ENCODE measurements at regions of chr17 and their contacts with region 1.

Region 1: GRCh38 chr17:28252436-28252835 is 66.6 kb upstream of the TMEM97 start:
- DNase-seq: no peak
- H3K4me3 ChIP-seq: no peak overlapping the region
- H3K27ac ChIP-seq: no peak overlapping the region
- H3K4me1 ChIP-seq: peaks cover 0 to 5% (median 3%) of the 10 kb centered on the region in 4 experiments; a peak in 4 of 7 replicates
- H3K27me3 ChIP-seq: 0 out of 7 replicates have a peak, but pooled peaks cover 0 to 2% (median 0%) of the 10 kb centered on the region in 4 experiments
- CTCF ChIP-seq: no peak
- EP300 ChIP-seq: no peak
- POLR2A ChIP-seq: no peak
- RAD21 ChIP-seq: no peak

Region 2: GRCh38 chr17:28161311-28161710 is 91.1 kb before region 1 on chr17:
- CTCF ChIA-PET with region 1: no interaction called
- POLR2A ChIA-PET with region 1: no interaction called
- DNase-seq: no peak
- H3K4me3 ChIP-seq: no peak overlapping the region
- H3K27ac ChIP-seq: no peak overlapping the region
- H3K4me1 ChIP-seq: no peaks in the 10 kb centered on the region
- H3K27me3 ChIP-seq: no peaks in the 10 kb centered on the region
- CTCF ChIP-seq: no peak
- EP300 ChIP-seq: no peak
- POLR2A ChIP-seq: no peak
- RAD21 ChIP-seq: no peak

Region 3: DNA sequence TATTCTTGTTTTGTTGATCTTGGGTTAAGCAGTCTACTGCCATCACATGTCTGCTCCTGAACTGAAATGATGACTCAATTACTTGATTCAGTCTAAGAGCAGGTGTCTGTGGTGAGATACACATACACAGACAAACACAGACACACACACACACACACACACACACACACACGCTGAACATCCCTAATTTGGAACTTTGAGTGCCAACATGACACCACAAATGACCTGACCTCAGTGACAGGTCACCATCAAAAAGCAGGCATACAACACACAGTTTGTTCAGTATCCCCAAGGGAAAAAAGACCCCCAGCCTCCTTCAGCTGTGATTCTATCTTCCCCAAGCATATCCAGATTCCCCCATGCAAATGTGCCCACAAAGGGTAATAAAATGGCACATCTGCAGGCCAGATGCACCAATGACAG is 63.6 kb before region 1 on chr17:
- CTCF ChIA-PET with region 1: no interaction called
- POLR2A ChIA-PET with region 1: no interaction called
- DNase-seq: no peak
- H3K4me3 ChIP-seq: no peak overlapping the region
- H3K27ac ChIP-seq: no peak overlapping the region
- H3K4me1 ChIP-seq: no peaks in the 10 kb centered on the region
- H3K27me3 ChIP-seq: no peaks in the 10 kb centered on the region
- CTCF ChIP-seq: no peak
- EP300 ChIP-seq: no peak
- POLR2A ChIP-seq: no peak
- RAD21 ChIP-seq: no peak

Region 4: DNA sequence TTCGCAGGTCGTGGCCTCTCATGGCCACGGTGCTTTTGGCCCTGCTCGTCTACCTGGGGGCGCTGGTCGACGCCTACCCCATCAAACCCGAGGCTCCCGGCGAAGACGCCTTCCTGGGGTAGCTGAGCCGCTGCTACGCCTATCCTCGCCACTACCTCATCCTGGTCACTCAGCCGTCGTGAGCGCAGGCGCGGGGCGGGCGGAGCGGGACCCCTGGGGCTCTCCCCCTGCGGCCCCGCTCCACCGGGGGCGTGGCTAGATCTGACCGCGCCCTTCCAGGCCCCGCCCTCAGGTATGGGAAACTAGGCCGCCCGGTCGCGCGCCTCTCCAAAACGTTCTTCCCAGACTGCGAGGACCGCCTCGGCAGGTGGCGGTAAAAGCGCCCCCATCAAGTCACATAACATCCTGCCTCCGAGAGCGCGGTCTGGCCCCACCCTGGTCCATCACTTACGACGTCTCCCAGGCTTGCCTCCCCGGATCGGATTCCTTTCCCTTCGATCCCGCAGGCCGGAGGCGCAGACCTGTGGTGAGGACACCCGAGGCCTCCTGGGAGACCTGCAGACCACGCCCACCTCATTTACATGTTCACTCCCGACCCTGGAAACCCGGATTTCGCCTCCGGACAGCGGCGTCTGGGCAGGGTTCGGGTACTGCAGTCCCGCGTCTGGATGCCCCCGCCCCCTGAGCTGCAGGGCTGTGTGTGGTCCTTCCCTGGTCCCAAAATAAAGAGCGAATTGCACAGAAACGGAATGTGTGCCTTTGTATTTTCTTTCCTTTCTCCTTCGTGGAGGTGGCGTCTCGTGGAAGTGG is 24.9 kb before region 1 on chr17:
- CTCF ChIA-PET with region 1: interaction called, 266 read pairs
- POLR2A ChIA-PET with region 1: interaction called, 3 read pairs
- DNase-seq: peak; percentile 94 to 98
- H3K4me3 ChIP-seq: peak overlapping the region; percentile 78 to 86 (median 84)
- H3K27ac ChIP-seq: peak overlapping the region; percentile 74; the same call in 1 of the 2 replicates
- H3K4me1 ChIP-seq: peaks cover 6 to 24% (median 9%) of the 10 kb centered on the region in 4 experiments
- H3K27me3 ChIP-seq: no peaks in the 10 kb centered on the region
- CTCF ChIP-seq: peak in 2 of 3 experiments; percentile 3 to 33; a peak in 3 of 4 replicates
- EP300 ChIP-seq: no peak
- POLR2A ChIP-seq: peak in 1 of 2 experiments; percentile 86; a peak in 2 of 3 replicates
- RAD21 ChIP-seq: peak; percentile 11 to 18; a peak in 1 of 4 replicates

Region 5: DNA sequence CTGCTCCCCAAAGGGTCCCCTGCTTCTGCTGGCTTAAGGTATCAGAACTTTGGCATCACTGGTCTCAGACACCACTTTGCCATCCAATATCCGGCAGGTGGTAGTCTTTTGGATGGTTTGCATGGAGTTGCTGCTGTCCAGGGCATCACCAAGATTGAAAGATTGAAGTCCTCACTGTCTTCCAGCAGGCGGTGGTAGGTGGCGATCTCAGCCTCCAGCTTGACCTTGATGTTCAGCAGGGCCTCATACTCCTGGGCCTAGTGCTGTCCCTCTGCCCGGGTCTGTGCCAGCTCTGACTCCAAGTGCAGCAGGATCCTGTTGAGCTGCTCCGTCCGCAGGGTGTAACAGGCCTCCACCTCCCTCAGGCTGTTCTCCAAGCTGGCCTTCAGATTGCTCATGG is 23.6 kb after region 1 on chr17:
- CTCF ChIA-PET with region 1: interaction called, 10 read pairs
- POLR2A ChIA-PET with region 1: no interaction called
- DNase-seq: no peak
- H3K4me3 ChIP-seq: no peak overlapping the region
- H3K27ac ChIP-seq: no peak overlapping the region
- H3K4me1 ChIP-seq: no peaks in the 10 kb centered on the region
- H3K27me3 ChIP-seq: no peaks in the 10 kb centered on the region
- CTCF ChIP-seq: no peak
- EP300 ChIP-seq: no peak
- POLR2A ChIP-seq: no peak
- RAD21 ChIP-seq: no peak

Region 6: DNA sequence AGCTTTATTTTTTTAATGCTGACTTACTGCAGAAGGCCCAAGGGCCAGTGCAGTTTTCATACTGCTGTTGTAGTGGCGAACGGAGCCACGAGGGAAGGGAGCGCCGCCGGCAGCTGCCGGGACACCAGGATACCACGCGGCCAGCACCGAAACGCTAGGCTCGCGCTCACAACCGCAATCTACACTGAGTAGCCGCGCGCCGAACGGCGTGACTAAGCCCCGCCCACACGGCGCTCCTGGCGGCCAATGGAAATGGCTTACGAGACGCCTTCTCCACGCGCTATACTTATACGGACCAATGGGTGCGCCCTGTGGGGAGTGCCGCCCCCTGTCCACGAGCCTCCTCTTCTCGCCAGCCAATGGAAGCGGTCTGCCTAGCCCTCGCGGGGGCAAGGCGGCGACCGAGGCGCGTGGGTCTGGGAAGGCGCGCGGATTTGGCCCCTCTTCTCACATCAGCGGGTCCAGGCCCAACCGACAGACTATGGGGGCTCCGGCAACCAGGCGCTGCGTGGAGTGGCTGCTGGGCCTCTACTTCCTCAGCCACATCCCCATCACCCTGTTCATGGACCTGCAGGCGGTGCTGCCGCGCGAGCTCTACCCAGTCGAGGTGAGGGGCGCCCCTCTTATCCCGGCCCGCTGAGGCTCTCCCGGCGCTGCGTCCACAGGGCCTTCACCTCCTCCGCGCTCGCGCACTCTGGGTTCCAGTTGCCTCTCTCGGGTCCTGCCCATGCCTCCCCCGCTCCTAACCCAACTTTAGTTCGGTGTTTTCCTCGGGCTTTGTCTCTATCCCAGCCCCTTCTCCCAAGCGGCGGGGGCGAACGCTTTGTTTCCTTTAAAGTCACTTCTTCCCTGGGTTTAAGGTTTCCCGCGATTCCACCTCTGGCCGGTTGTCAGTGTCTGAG is 66.6 kb after region 1 on chr17 and contains the start of gene TMEM97:
- CTCF ChIA-PET with region 1: interaction called, 12 read pairs
- POLR2A ChIA-PET with region 1: interaction called, 3 read pairs
- DNase-seq: peak; percentile 73 to 92
- H3K4me3 ChIP-seq: peak within 1 kb of the TSS; percentile 63 to 90 (median 70)
- H3K27ac ChIP-seq: peak within 1 kb of the TSS; percentile 56
- H3K4me1 ChIP-seq: peaks cover 4 to 26% (median 13%) of the 10 kb centered on the region in 4 experiments
- H3K27me3 ChIP-seq: peaks cover 0 to 3% (median 0%) of the 10 kb centered on the region in 4 experiments; a peak in 1 of 7 replicates
- CTCF ChIP-seq: no peak
- EP300 ChIP-seq: no peak
- POLR2A ChIP-seq: peak in 1 of 2 experiments; percentile 56; a peak in 1 of 3 replicates
- RAD21 ChIP-seq: no peak
- total RNA-seq, gene TMEM97: 130 and 136 TPM in 2 replicates

Measured in H1 (cell line).